Lower leg skin (tissue), 4 donors: ENCODE measurements at regions of chr1 and their contacts with region 1.

Region 1: GRCh38 chr1:151198255-151199127 is at the start of gene PIP5K1A:
- DNase-seq: peak; percentile 98 to 100
- H3K4me3 ChIP-seq: peak within 1 kb of the TSS; percentile 77
- CTCF ChIP-seq: no peak
- POLR2A ChIP-seq: no peak
- total RNA-seq, gene PIP5K1A: 27.7 to 67.6 (median 44.1) TPM

Region 2: GRCh38 chr1:151085953-151086559 is 112.4 kb before region 1 on chr1:
- intact Hi-C with region 1: no loop called
- DNase-seq: peak in 1 of 2 donors; percentile 32
- H3K4me3 ChIP-seq: no peak overlapping the region
- CTCF ChIP-seq: no peak
- POLR2A ChIP-seq: no peak

Region 3: DNA sequence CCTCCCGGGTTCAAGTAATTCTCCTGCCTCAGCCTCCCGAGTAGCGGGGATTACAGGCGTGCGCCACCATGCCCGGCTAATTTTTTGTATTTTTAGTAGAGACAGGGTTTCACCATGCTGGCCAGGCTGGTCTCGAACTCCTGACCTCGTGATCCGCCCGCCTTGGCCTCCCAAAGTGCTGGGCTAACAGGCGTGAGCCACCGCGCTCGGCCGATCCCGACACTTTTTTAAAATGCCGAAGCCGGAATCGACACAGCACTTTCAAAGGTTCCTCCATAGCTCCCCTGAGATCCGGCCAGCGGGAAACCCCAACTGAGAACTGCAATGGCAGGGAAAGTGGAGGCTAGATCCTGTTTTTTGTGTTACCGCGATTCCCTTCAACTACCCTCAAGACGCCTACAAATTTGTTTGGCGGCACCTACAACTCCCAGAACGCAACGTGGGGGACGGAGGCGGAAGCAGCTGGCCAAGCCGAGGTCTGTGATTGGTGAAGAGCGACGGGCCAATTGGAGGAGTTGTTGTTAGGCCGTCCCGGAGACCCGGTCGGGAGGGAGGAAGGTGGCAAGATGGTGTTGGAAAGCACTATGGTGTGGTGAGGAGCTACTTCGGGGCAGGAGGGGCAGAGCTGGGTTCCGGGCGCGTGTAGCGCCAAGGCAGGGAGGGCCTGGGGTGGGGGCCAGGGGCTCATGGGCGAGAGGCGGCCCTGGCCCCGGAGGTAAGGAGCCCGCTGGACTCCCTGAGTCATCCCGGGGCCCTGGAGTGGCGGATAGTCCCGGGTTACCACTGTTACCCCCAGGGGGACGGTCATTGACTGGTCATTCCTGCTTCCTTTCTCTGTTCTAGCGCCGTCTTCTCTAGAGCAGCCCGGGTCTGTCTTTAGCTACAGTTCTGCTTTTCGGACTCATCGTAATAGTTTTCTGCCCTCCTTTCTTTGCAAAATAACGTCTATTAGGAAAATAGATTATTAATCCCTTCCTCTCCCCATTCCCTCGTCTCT is 56.0 kb after region 1 on chr1 and contains the start of gene PSMD4:
- intact Hi-C with region 1: loop called (anchors 5 kb)
- DNase-seq: peak; percentile 96 to 99
- H3K4me3 ChIP-seq: peak within 1 kb of the TSS; percentile 30
- CTCF ChIP-seq: no peak
- POLR2A ChIP-seq: no peak
- total RNA-seq, gene PSMD4: 69.9 to 122 (median 118) TPM

Region 4: DNA sequence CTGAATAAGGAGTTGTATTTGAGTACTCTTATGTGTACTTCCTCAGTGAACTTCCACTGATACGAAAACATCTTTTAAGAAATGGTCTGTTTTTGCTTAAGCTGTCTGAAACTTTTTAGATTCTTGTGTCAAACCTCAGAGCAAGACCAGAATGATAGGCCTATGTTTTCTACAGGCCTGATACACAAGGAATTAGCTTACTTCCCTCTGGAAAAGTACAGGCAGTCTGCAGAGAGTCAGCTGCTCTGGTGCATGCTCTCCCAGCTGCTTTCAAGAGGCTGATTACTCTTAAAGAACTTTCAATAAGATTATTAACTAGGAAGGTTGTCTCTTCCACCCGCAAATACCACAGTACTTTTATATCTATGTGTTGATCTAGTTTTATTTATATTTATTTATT is 422.9 kb after region 1 on chr1:
- intact Hi-C with region 1: no loop called
- DNase-seq: no peak
- H3K4me3 ChIP-seq: no peak overlapping the region
- CTCF ChIP-seq: no peak
- POLR2A ChIP-seq: no peak